ENCODE measurements at regions of chr2 and their contacts with region 1.

Region 1: DNA sequence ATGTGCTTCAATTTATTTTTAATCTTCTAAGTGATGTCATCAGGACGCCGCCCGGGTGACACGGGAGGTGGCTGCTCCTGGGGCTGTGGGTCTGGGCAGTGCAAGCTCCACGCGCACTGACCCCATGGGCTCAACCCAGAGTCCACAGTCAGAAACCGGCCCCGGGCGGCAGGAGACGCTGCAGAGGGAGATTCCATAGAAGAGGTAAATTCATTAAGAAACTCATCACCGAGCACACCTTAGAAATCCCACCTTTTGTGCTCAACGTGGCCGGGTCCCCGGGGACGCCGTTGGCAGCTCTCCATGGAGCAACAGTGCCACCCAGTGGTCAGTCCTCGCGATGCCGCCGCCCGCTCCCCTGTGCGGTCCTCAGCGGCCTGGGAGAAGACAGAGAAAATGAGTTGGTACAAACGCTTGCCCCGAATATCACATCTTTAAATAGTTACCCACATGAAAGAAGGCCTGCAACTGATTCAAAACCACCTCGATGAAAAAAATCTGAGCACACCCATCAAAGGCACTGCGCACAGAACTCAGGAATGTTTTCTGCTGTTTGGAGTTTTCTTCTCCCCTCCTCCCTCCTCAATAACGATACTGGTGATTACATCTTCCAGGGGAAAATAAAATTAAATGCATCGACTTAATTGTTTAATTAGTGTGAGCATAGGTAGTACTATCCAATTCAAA is 92.6 kb downstream of the CMPK2 start:
- DNase-seq: no peak
- H3K4me3 ChIP-seq: peak overlapping the region in 1 of 4 donors; percentile 1
- H3K27ac ChIP-seq: no peak overlapping the region
- H3K4me1 ChIP-seq: peaks cover 5 to 8% (median 6%) of the 10 kb centered on the region in 4 donors
- H3K27me3 ChIP-seq: peaks cover 0 to 37% (median 3%) of the 10 kb centered on the region in 4 donors
- CTCF ChIP-seq: peak; percentile 80 to 95 (median 89)
- EP300 ChIP-seq: no peak
- POLR2A ChIP-seq: no peak

Region 2: GRCh38 chr2:6352906-6353515 is 420.1 kb before region 1 on chr2:
- intact Hi-C with region 1: loop called (anchors 5 kb)
- DNase-seq: no peak
- H3K4me3 ChIP-seq: no peak overlapping the region
- H3K27ac ChIP-seq: no peak overlapping the region
- H3K4me1 ChIP-seq: no peaks in the 10 kb centered on the region
- H3K27me3 ChIP-seq: no peaks in the 10 kb centered on the region
- CTCF ChIP-seq: peak; percentile 37 to 50 (median 39)
- EP300 ChIP-seq: no peak
- POLR2A ChIP-seq: no peak

Region 3: GRCh38 chr2:6917071-6917760 is 144.1 kb after region 1 on chr2 and contains the start of gene RNF144A:
- intact Hi-C with region 1: no loop called
- DNase-seq: no peak
- H3K4me3 ChIP-seq: peak within 1 kb of the TSS; percentile 74 to 90 (median 78)
- H3K27ac ChIP-seq: peak within 1 kb of the TSS; percentile 64 to 80 (median 70)
- H3K4me1 ChIP-seq: peaks cover 18 to 39% (median 29%) of the 10 kb centered on the region in 4 donors
- H3K27me3 ChIP-seq: no peaks in the 10 kb centered on the region
- CTCF ChIP-seq: peak; percentile 33 to 57 (median 50)
- EP300 ChIP-seq: no peak
- POLR2A ChIP-seq: no peak
- total RNA-seq, gene RNF144A: 5.4 to 10.8 (median 8.8) TPM

Region 4: GRCh38 chr2:7324706-7325105 is 551.6 kb after region 1 on chr2:
- intact Hi-C with region 1: no loop called
- DNase-seq: no peak
- H3K4me3 ChIP-seq: no peak overlapping the region
- H3K27ac ChIP-seq: no peak overlapping the region
- H3K4me1 ChIP-seq: no peaks in the 10 kb centered on the region
- H3K27me3 ChIP-seq: peaks cover 0 to 4% (median 0%) of the 10 kb centered on the region in 4 donors
- CTCF ChIP-seq: no peak
- EP300 ChIP-seq: no peak
- POLR2A ChIP-seq: no peak